Activated CD8-positive, alpha-beta T cell treated with anti-CD3 and anti-CD28 coated beads for 36 hours (primary cell): ENCODE measurements at regions of chr3 and their contacts with region 1.

Region 1: DNA sequence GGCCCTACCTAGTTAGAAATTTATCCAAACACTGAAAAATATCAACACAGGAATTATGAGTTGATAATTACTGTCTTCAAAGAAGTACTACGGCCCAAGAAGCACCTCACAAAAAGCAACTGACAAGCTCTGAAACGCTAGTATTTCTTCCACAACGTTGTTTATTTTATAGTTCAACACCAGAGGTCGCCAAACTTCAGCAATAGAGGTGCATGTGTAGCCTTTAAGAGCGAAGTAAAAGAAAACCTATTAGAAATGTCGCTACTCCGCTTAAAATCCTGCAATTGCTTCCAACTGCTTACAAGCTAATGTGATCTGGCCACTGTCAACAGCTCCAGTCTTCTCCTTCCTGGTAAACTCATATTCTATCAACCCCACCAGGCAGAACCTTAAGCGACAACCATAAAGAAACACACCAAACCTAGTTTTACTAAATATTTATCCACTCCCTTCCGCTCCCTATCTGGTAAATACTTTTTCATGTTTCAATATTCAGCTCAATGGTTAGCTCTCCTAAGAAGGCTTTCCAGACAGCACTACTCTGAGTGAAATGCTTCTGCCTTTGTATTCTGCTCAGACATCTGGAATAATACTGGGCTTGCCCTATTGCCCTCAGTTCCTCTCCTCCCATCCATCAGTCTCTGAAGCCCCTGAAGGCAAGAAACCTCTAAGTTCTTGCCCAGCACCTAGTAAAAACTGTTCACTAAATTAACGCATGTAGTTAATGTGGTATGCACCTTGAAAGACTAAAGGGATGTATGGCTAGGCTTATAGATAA is 110.2 kb downstream of the NR1I2 start:
- DNase-seq: peak; percentile 45
- ATAC-seq: peak; percentile 80
- H3K4me3 Mint-ChIP-seq: no peak overlapping the region
- H3K27ac Mint-ChIP-seq: no peak overlapping the region
- H3K4me1 Mint-ChIP-seq: peaks cover 20% of the 10 kb centered on the region
- H3K27me3 Mint-ChIP-seq: no peaks in the 10 kb centered on the region
- CTCF ChIP-seq: peak; percentile 81

Region 2: DNA sequence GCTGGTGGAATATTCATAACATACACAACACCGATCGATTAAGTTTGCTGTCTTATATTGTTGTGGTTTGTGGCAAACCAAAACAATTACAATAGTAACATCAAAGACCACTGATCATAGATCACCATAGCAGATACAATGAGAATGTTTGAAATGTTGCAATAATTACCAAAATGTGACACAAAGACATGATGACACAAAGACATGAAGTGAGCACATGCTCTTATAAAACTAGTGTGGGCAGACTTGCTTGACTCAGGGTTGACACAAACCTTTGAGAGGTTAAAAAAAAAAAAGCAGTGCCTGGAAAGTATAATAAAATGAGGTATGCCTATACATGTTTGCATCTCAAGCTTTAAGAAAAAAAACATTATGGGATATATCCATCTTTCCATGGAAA is 20.1 kb after region 1 on chr3:
- CTCF ChIA-PET with region 1: interaction called, 24 read pairs
- POLR2A ChIA-PET with region 1: no interaction called
- intact Hi-C with region 1: no loop called
- DNase-seq: no peak
- ATAC-seq: peak; percentile 84
- H3K4me3 Mint-ChIP-seq: peak overlapping the region; percentile 29
- H3K27ac Mint-ChIP-seq: peak overlapping the region; percentile 92
- H3K4me1 Mint-ChIP-seq: peaks cover 36% of the 10 kb centered on the region
- H3K27me3 Mint-ChIP-seq: no peaks in the 10 kb centered on the region
- CTCF ChIP-seq: no peak

Region 3: DNA sequence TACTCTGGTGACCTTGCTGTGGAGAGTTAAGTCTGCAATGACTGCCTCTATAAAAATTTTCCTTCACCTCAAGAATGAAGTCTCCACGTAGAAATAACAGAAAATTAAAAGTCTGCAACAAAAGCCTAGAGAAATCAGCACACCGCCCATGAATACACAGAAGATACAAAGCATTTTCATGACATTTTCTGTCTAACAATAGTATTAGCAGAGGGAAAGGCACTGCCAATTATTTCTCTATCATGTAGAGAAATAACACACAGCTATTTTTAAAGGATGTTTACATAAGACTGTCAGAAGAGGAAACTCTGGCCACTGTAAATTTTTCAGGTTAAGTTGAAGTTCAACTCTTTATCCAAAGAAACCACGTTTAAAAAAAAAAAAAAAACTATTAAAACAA is 121.3 kb after region 1 on chr3:
- CTCF ChIA-PET with region 1: no interaction called
- POLR2A ChIA-PET with region 1: no interaction called
- intact Hi-C with region 1: no loop called
- DNase-seq: no peak
- ATAC-seq: no peak
- H3K4me3 Mint-ChIP-seq: no peak overlapping the region
- H3K27ac Mint-ChIP-seq: no peak overlapping the region
- H3K4me1 Mint-ChIP-seq: peaks cover 62% of the 10 kb centered on the region
- H3K27me3 Mint-ChIP-seq: no peaks in the 10 kb centered on the region
- CTCF ChIP-seq: no peak

Region 4: DNA sequence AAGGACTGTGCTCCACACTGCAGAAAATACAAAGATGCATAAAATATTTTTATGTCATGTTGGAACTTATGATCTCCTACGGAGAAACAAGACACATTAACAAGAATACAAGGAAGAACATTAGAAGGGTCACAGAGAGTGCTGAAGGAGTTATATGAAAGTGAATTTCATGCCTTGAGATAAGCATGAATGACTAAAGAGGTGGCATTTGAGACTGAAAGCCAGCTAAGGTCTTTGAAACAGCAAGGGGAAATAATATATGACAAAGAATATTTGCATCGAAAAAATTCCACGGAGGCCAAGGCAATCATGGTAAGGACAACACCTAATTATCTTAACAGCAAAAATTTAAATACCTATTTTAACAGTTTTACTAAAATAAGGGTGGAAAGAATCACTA is 189.6 kb after region 1 on chr3:
- CTCF ChIA-PET with region 1: interaction called, 10 read pairs
- POLR2A ChIA-PET with region 1: no interaction called
- intact Hi-C with region 1: no loop called
- DNase-seq: no peak
- ATAC-seq: peak; percentile 51
- H3K4me3 Mint-ChIP-seq: no peak overlapping the region
- H3K27ac Mint-ChIP-seq: peak overlapping the region; percentile 38
- H3K4me1 Mint-ChIP-seq: peaks cover 62% of the 10 kb centered on the region
- H3K27me3 Mint-ChIP-seq: no peaks in the 10 kb centered on the region
- CTCF ChIP-seq: no peak

Region 5: GRCh38 chr3:120095226-120095978 is 203.3 kb after region 1 on chr3:
- CTCF ChIA-PET with region 1: interaction called, 35 read pairs
- POLR2A ChIA-PET with region 1: interaction called, 3 read pairs
- intact Hi-C with region 1: loop called (anchors 5 kb)
- DNase-seq: peak; percentile 94
- ATAC-seq: peak; percentile 39
- H3K4me3 Mint-ChIP-seq: no peak overlapping the region
- H3K27ac Mint-ChIP-seq: no peak overlapping the region
- H3K4me1 Mint-ChIP-seq: peaks cover 19% of the 10 kb centered on the region
- H3K27me3 Mint-ChIP-seq: no peaks in the 10 kb centered on the region
- CTCF ChIP-seq: no peak

Region 6: DNA sequence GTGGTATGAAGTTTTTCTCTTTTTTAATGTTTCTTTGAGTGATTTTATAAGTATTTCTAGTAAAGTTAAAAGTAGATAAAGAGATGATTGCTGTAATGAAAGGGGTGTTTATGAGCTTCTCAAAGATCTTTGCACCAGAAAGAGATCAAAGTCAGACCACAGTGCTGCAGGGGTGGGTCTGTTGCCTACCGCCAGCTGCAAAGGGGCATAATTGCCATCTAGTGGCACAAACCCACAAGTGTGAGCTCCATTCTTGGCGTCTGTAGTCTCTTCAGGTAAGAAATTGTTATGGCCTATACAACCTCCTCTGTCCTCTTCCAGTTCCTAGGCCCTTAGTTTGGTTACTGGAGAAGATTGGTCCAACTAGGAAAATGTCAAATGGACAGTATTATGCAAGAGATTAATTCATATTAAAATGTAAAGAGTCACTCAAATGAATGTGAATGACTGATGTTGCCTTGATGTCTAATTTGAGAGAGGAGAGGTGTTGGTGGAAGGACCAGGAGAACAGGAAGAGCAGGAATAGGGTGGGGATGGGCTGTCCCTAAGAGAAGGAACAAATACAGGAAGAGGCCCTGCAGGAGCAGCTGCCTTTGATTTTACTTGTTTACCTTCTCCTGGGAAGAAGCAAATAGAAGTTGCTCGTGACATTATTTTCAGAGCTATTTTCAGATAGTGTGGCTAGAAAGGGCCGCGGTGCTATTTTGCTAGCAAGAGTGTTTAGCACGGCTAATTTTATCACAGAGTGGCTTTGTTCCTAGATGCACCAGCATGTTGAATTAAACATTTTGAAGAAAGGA is 255.1 kb after region 1 on chr3:
- CTCF ChIA-PET with region 1: interaction called, 75 read pairs
- POLR2A ChIA-PET with region 1: no interaction called
- intact Hi-C with region 1: loop called (anchors 2 kb)
- DNase-seq: peak; percentile 67
- ATAC-seq: peak; percentile 43
- H3K4me3 Mint-ChIP-seq: no peak overlapping the region
- H3K27ac Mint-ChIP-seq: no peak overlapping the region
- H3K4me1 Mint-ChIP-seq: peaks cover 31% of the 10 kb centered on the region
- H3K27me3 Mint-ChIP-seq: no peaks in the 10 kb centered on the region
- CTCF ChIP-seq: peak; percentile 55

Region 7: GRCh38 chr3:120177707-120178306 is 285.7 kb after region 1 on chr3:
- CTCF ChIA-PET with region 1: interaction called, 11 read pairs
- POLR2A ChIA-PET with region 1: no interaction called
- intact Hi-C with region 1: no loop called
- DNase-seq: no peak
- ATAC-seq: no peak
- H3K4me3 Mint-ChIP-seq: no peak overlapping the region
- H3K27ac Mint-ChIP-seq: no peak overlapping the region
- H3K4me1 Mint-ChIP-seq: no peaks in the 10 kb centered on the region
- H3K27me3 Mint-ChIP-seq: no peaks in the 10 kb centered on the region
- CTCF ChIP-seq: no peak